Calu3 (cell line): ENCODE measurements at regions of chr17 and their contacts with region 1.

Region 1: GRCh38 chr17:48131216-48131824 is 23.8 kb downstream of the SNX11 start:
- DNase-seq: peak; percentile 85
- H3K4me3 Mint-ChIP-seq: no peak overlapping the region
- H3K27ac Mint-ChIP-seq: no peak overlapping the region
- H3K4me1 Mint-ChIP-seq: peaks cover 15% of the 10 kb centered on the region
- H3K27me3 Mint-ChIP-seq: no peaks in the 10 kb centered on the region
- CTCF ChIP-seq: peak; percentile 92

Region 2: DNA sequence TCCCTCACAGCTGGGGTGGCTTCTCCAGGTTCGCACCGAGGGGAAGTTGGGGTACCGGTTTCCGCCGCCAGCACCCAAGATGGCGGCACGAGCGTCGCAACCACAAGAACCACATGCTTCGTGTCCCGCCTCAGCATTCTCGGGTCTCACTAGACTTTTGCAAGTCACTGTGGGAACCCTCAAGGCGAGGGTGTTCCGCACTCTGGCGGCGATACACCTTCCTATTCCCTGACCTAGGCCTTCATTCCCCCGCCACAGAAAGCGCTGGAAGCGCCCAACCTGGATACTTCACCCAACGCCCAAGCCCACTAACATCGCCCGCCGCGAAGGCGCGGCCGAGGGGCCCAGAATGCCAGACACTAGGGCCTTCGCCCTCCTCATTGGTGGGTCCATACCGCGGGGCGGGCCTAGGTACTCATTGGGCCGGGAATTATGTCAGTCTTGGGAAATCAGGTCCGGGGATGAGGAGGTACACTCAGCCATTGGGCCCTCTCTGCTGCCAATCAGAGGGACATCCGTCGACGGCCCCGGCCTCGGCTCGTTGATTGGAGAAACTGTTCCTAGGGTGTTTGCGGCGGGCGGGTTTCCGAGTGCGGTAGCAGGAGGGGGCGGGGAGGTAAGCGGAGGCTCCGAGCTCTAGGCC is 83.5 kb before region 1 on chr17 and contains the start of gene NFE2L1:
- CTCF ChIA-PET with region 1: interaction called, 11 read pairs
- intact Hi-C with region 1: no loop called
- DNase-seq: peak; percentile 100
- H3K4me3 Mint-ChIP-seq: peak within 1 kb of the TSS; percentile 94
- H3K27ac Mint-ChIP-seq: peak within 1 kb of the TSS; percentile 88
- H3K4me1 Mint-ChIP-seq: peaks cover 53% of the 10 kb centered on the region
- H3K27me3 Mint-ChIP-seq: no peaks in the 10 kb centered on the region
- CTCF ChIP-seq: no peak
- total RNA-seq, gene NFE2L1: 216 and 247 TPM in 2 replicates

Region 3: DNA sequence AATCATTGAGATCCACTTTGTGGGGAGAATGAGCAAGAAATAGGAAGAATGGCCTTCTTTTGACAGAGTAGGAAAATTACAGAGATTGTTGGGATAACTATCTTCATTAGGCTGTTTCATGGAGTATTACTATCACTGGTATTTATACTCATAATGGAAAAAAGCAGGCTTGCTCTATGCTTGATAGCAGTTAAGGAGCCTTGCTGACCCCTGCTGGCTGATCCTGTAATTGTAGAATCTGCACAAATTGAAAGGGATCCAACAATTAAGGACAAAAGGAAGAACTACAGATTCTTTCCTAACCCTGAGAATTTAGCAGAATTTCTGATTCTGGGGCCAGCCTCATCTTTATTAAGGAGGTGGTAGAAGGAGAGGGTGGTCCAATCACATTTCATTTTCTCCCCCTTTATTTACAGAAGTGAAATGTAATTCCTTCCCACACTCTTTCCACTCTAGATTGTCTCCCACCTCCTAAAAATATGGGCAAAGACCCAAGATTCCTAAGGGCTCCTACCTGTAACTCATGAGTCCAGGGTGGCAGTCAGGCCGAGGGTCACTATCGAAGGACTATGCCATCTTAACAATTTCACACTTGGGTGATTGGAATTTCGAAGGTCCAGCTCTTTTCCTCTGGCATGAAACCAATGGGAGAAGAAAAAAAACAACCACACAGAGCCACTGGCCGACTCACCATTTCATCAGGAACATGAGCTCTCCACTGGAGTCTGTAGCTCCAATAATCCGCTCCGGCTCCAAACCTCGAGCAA is 56.8 kb before region 1 on chr17:
- CTCF ChIA-PET with region 1: interaction called, 21 read pairs
- intact Hi-C with region 1: no loop called
- DNase-seq: peak; percentile 87
- H3K4me3 Mint-ChIP-seq: no peak overlapping the region
- H3K27ac Mint-ChIP-seq: peak overlapping the region; percentile 21
- H3K4me1 Mint-ChIP-seq: no peaks in the 10 kb centered on the region
- H3K27me3 Mint-ChIP-seq: no peaks in the 10 kb centered on the region
- CTCF ChIP-seq: peak; percentile 83

Region 4: GRCh38 chr17:48084932-48085444 is 46.3 kb before region 1 on chr17:
- CTCF ChIA-PET with region 1: interaction called, 21 read pairs
- intact Hi-C with region 1: loop called (anchors 1 kb)
- DNase-seq: no peak
- H3K4me3 Mint-ChIP-seq: no peak overlapping the region
- H3K27ac Mint-ChIP-seq: no peak overlapping the region
- H3K4me1 Mint-ChIP-seq: peaks cover 9% of the 10 kb centered on the region
- H3K27me3 Mint-ChIP-seq: no peaks in the 10 kb centered on the region
- CTCF ChIP-seq: no peak

Region 5: DNA sequence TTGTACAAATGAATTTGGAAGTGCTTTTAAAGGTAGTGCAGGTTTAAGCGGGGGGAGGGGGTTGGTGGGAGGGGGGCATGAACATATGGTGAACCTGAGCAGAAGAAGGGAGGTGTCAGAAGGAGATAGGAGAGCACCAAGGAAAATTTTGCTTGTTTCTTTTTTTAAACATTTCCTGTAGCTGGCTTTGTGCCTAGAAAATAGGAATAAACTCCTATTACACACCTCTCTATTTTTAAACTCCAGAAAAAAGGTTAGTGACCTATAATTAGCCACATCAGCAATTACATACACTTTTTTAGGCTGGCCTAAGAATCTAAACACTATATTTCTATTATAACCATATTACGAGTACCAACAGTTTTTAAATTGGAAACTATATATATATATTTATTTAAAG is 139.6 kb after region 1 on chr17:
- CTCF ChIA-PET with region 1: no interaction called
- intact Hi-C with region 1: no loop called
- DNase-seq: no peak
- H3K4me3 Mint-ChIP-seq: no peak overlapping the region
- H3K27ac Mint-ChIP-seq: no peak overlapping the region
- H3K4me1 Mint-ChIP-seq: peaks cover 38% of the 10 kb centered on the region
- H3K27me3 Mint-ChIP-seq: no peaks in the 10 kb centered on the region
- CTCF ChIP-seq: no peak